Psoas muscle (tissue), 8 donors: ENCODE measurements at regions of chr12 and their contacts with region 1.

Region 1: GRCh38 chr12:56189176-56189917 is at the start of gene SMARCC2:
- DNase-seq: peak; percentile 88 to 95
- ATAC-seq: peak; percentile 87 to 91 (median 90)
- H3K4me3 ChIP-seq: peak within 1 kb of the TSS; percentile 83
- H3K27ac ChIP-seq: peak within 1 kb of the TSS; percentile 91
- H3K4me1 ChIP-seq: peaks cover 18% of the 10 kb centered on the region
- H3K27me3 ChIP-seq: no peaks in the 10 kb centered on the region
- CTCF ChIP-seq: peak; percentile 83
- total RNA-seq, gene SMARCC2: 49.8 to 78.7 (median 69.7) TPM

Region 2: GRCh38 chr12:56152318-56153033 is 36.9 kb before region 1 on chr12 and contains the start of gene MYL6B:
- intact Hi-C with region 1: loop called in 1 of 2 experiments (anchors 2 kb)
- DNase-seq: peak; percentile 96 to 97
- ATAC-seq: peak; percentile 94 to 97 (median 96)
- H3K4me3 ChIP-seq: peak within 1 kb of the TSS; percentile 75
- H3K27ac ChIP-seq: peak within 1 kb of the TSS; percentile 90
- H3K4me1 ChIP-seq: peaks cover 25% of the 10 kb centered on the region
- H3K27me3 ChIP-seq: no peaks in the 10 kb centered on the region
- CTCF ChIP-seq: no peak
- total RNA-seq, gene MYL6B: 113 to 2,222 (median 606) TPM

Region 3: GRCh38 chr12:56224102-56224701 is 34.9 kb after region 1 on chr12 and contains the start of gene NABP2:
- intact Hi-C with region 1: loop called (anchors 1 to 5 kb)
- DNase-seq: peak; percentile 99
- ATAC-seq: peak; percentile 86 to 90 (median 89)
- H3K4me3 ChIP-seq: peak within 1 kb of the TSS; percentile 75
- H3K27ac ChIP-seq: peak within 1 kb of the TSS; percentile 96
- H3K4me1 ChIP-seq: peaks cover 34% of the 10 kb centered on the region
- H3K27me3 ChIP-seq: no peaks in the 10 kb centered on the region
- CTCF ChIP-seq: peak; percentile 84
- total RNA-seq, gene NABP2: 27.2 to 32.1 (median 29.8) TPM

Region 4: DNA sequence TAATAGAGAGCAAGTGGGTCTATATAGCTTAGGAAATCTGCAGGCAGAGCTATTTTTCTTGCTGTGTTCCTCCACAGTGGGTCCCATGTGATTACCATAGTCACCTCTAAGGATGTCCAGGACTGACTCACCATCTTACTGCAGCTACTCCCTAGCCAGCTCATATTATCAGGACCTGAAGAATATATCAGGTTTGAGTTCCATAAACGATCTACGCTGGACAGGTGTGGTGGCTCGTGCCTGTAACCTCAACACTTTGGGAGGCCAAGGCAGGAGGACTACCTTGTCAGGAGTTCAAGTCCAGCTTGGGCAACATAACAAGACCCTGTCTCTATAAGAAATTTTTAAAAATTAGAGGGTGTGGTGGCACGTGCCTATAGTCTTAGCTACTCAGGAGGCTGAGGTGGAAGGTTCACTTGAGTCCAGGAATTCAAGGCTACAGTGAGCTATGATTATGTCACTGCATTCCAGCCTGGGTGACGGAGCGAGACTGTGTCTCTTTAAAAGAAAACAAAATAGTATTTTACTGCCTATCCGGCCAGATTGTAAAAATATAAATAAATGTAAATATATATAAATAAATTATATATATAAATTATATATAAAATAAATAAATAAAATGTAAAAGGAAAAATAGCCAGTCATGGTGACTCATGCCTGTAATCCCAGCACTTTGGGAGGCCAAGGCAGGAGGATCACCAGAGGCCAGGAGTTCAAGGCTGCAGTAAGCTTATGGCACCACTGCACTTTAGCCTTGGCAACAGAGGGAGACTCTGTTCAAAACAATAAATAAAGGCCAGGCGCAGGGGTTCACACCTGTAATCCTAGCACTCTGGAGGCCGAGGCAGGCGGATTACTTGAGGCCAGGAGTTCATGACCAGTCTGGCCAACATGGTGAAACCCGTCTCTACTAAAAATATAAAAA is 272.1 kb after region 1 on chr12:
- intact Hi-C with region 1: loop called (anchors 2 to 5 kb)
- DNase-seq: no peak
- ATAC-seq: no peak
- H3K4me3 ChIP-seq: no peak overlapping the region
- H3K27ac ChIP-seq: no peak overlapping the region
- H3K4me1 ChIP-seq: no peaks in the 10 kb centered on the region
- H3K27me3 ChIP-seq: no peaks in the 10 kb centered on the region
- CTCF ChIP-seq: no peak